ENCODE measurements at regions of chr1 and their contacts with region 1.

Region 1: DNA sequence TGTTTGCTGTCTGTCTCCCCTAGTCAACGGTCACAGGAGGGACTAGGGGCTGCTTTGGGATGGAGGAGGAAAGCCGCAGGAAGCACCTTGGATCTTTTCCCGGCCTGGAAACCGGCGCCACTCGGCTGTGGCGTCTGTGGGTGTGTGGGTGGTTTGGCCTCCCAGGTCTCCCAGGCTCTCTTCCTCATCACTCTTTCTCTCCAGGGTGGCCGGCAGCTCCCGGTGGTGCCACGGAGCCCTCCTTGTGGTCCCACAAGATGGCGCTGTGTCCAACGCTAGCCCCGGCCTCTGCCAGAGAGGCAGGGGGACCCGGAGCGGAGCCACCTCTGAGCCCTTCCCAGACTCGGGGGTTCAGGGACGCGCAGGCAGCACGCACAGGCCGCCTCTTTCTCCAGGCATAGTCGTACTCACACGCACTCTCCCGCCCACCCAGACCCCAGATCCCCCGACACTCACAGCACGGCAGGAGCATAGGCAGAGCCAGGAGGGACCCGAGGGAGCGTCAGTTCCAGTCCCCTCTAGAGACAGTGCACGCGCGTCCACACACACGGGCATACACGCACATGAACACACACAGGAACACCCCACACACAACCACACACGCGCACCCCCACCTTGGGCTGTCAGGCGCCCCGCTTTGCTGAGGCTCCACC is 31.2 kb downstream of the CDCP2 start:
- DNase-seq: peak; percentile 44
- H3K4me3 ChIP-seq: peak overlapping the region in 2 of 3 experiments; percentile 6 to 22
- H3K27ac ChIP-seq: no peak overlapping the region
- H3K4me1 ChIP-seq: peaks cover 8% of the 10 kb centered on the region
- H3K27me3 ChIP-seq: no peaks in the 10 kb centered on the region
- CTCF ChIP-seq: peak; percentile 57 to 79

Region 2: DNA sequence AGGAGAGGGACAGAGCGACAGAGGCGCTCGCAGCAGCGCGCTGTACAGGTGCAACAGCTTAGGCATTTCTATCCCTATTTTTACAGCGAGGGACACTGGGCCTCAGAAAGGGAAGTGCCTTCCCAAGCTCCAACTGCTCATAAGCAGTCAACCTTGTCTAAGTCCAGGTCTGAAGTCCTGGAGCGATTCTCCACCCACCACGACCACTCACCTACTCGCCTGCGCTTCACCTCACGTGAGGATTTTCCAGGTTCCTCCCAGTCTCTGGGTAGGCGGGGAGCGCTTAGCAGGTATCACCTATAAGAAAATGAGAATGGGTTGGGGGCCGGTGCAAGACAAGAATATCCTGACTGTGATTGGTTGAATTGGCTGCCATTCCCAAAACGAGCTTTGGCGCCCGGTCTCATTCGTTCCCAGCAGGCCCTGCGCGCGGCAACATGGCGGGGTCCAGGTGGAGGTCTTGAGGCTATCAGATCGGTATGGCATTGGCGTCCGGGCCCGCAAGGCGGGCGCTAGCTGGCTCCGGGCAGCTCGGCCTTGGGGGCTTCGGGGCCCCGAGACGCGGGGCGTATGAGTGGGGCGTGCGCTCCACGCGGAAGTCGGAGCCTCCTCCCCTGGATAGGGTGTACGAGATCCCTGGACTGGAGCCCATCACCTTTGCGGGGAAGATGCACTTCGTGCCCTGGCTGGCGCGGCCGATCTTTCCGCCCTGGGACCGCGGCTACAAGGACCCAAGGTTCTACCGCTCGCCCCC is 78.3 kb after region 1 on chr1 and contains the starts of genes CYB5RL and MRPL37:
- CTCF ChIA-PET with region 1: no interaction called
- dilution Hi-C with region 1: no loop called
- in situ Hi-C with region 1: no loop called
- intact Hi-C with region 1: loop called (anchors 2 kb)
- DNase-seq: peak; percentile 96
- H3K4me3 ChIP-seq: peak within 1 kb of the TSS; percentile 73 to 91 (median 76)
- H3K27ac ChIP-seq: peak within 1 kb of the TSS; percentile 36
- H3K4me1 ChIP-seq: peaks cover 16% of the 10 kb centered on the region
- H3K27me3 ChIP-seq: no peaks in the 10 kb centered on the region
- CTCF ChIP-seq: no peak
- total RNA-seq, gene CYB5RL: 1.7 to 4.0 TPM
- total RNA-seq, gene MRPL37: 90.9 to 96.2 TPM

Region 3: GRCh38 chr1:54499360-54500106 is 377.9 kb after region 1 on chr1:
- CTCF ChIA-PET with region 1: no interaction called
- dilution Hi-C with region 1: no loop called
- in situ Hi-C with region 1: loop called in 1 of 2 experiments (anchors 10 kb)
- intact Hi-C with region 1: no loop called
- DNase-seq: peak; percentile 12
- H3K4me3 ChIP-seq: peak overlapping the region; percentile 29 to 45 (median 44)
- H3K27ac ChIP-seq: no peak overlapping the region
- H3K4me1 ChIP-seq: peaks cover 20% of the 10 kb centered on the region
- H3K27me3 ChIP-seq: no peaks in the 10 kb centered on the region
- CTCF ChIP-seq: peak in 1 of 2 donors; percentile 59

Region 4: DNA sequence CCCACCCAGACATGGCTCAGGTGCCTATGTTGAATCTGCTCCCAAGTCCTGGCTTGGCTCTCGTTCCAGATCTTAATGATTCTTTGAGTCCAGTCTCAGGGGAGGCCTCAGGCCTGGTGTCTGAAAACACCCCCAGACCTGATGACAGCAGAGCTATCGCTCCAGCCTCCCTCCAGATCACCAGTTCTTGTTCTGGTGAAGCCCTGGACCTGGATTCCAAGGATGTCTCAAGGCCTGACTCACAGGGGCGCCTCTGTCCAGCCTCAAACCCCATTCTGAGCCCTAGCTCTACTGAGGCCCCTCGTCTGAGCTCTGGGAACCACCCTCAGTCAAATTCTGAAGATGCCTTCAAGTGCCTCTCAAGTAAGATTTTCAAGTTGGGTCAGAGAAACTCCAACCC is 531.4 kb after region 1 on chr1:
- CTCF ChIA-PET with region 1: no interaction called
- dilution Hi-C with region 1: no loop called
- in situ Hi-C with region 1: no loop called
- intact Hi-C with region 1: loop called (anchors 10 kb)
- DNase-seq: no peak
- H3K4me3 ChIP-seq: no peak overlapping the region
- H3K27ac ChIP-seq: no peak overlapping the region
- H3K4me1 ChIP-seq: no peaks in the 10 kb centered on the region
- H3K27me3 ChIP-seq: no peaks in the 10 kb centered on the region
- CTCF ChIP-seq: no peak